ENCODE measurements at regions of chr20 and their contacts with region 1.

Region 1: DNA sequence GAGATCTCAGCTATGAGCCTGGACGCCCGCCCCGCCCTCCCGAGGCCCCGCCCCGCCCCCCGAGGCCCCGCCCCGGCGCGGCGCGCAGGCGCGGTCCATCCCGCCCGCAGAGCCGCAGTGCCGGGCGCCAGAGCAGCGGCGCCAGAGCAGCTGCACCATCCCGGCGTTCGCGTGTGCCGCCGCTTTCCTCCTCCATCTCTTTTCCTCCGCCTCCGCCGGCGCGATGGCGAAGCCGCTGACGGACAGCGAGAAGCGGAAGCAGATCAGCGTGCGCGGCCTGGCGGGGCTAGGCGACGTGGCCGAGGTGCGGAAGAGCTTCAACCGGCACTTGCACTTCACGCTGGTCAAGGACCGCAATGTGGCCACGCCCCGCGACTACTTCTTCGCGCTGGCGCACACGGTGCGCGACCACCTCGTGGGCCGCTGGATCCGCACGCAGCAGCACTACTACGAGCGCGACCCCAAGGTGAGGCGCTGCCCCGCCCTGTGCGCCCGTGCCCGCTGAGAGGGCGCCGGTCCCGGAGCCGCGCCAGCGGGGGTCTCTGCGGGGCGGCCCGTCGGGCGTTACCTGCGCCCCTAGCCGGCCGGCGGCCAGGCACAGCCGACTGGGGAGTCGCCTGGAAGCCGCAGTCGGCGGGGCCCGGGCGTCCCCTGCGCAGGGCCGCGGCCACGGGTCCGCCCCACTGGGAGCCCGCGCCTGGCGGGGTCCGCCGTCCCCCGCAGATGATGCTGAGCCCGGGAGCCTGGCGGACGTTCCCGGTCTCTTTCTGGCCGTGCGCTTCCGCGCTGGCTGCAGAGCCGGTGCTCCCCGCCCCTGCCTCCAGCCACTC is at the start of gene PYGB:
- DNase-seq: peak; percentile 83
- H3K4me3 ChIP-seq: peak within 1 kb of the TSS; percentile 91 to 97
- H3K27ac ChIP-seq: peak within 1 kb of the TSS; percentile 96 to 98
- H3K4me1 ChIP-seq: peaks cover 25% of the 10 kb centered on the region
- H3K27me3 ChIP-seq: no peaks in the 10 kb centered on the region
- CTCF ChIP-seq: peak in 1 of 4 experiments; percentile 9
- POLR2A ChIP-seq: peak; percentile 95
- total RNA-seq, gene PYGB: 231 to 261 TPM

Region 2: DNA sequence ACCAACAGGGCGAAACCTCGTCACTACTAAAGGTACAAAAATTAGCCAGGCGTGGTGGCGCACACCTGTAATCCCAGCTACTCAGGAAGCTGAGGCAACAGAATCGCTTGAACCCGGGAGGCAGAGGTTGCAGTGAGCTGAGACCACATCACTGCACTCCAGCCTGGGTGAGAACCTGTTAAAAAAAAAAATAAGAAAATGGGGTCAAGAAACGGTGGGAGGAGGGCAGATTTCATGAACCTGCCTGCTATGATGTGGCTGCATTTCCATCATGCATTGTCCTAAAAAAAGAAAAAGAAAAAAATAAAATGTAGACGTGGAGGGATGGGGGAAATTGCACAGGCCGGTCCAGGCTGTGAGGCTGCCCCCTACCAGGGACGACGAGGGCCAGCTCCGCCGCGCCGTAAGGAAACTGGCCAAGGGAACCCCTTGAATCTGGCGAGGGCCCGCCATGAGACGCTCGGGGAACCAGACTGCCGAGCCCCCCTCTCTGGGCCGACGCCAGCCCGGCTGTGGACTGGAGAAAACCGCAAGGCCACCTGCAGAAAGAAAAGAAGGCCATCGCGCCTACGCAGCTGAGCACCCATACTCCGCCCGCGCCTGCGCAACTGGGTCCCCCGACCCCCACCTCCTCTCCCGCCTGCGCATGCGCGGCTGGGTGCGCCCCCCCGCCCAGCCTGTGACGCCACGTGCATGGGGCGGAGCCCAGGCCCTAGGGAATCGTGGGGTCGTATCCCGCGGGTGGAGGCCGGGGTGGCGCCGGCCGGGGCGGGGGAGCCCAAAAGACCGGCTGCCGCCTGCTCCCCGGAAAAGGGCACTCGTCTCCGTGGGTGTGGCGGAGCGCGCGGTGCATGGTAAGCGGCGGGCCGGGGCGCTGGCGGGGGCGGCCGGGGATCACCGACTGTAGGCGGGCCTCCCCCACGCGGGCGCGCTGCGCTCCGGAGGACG is 52.9 kb before region 1 on chr20 and contains the start of gene ENTPD6:
- intact Hi-C with region 1: loop called (anchors 2 kb)
- DNase-seq: peak; percentile 92
- H3K4me3 ChIP-seq: peak within 1 kb of the TSS; percentile 78 to 94
- H3K27ac ChIP-seq: peak within 1 kb of the TSS; percentile 93 to 95
- H3K4me1 ChIP-seq: peaks cover 4% of the 10 kb centered on the region
- H3K27me3 ChIP-seq: no peaks in the 10 kb centered on the region
- CTCF ChIP-seq: peak in 3 of 4 experiments; percentile 20 to 45 (median 31)
- POLR2A ChIP-seq: peak; percentile 92
- total RNA-seq, gene ENTPD6: 105 to 194 TPM

Region 3: GRCh38 chr20:25273541-25274358 is 25.6 kb after region 1 on chr20:
- intact Hi-C with region 1: loop called (anchors 1 kb)
- DNase-seq: peak; percentile 79
- H3K4me3 ChIP-seq: peak overlapping the region in 1 of 2 donors; percentile 6
- H3K27ac ChIP-seq: peak overlapping the region; percentile 70 to 74
- H3K4me1 ChIP-seq: peaks cover 21% of the 10 kb centered on the region
- H3K27me3 ChIP-seq: no peaks in the 10 kb centered on the region
- CTCF ChIP-seq: no peak
- POLR2A ChIP-seq: no peak

Region 4: DNA sequence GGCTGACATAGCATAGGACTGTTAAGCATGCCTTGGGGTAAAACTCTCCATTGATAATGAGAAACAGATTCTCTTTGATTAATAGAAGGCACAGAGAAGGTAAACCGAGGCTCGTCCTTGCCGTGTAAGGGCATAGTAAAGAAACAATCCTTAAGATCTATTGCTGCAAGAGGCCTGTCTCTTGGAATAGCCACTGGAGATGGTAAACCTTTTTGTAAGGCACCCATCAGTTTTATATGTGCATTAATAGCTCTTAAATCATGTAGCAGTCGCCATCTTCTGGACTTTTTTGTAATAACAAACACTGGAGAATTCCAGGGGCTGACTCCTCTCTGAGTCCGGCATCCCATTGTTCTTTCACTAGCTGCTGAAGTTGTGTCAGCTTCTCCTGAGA is 150.9 kb after region 1 on chr20:
- intact Hi-C with region 1: loop called (anchors 2 kb)
- DNase-seq: peak; percentile 72
- H3K4me3 ChIP-seq: no peak overlapping the region
- H3K27ac ChIP-seq: peak overlapping the region in 1 of 2 donors; percentile 5
- H3K4me1 ChIP-seq: no peaks in the 10 kb centered on the region
- H3K27me3 ChIP-seq: no peaks in the 10 kb centered on the region
- CTCF ChIP-seq: peak in 3 of 4 experiments; percentile 53 to 77 (median 69)
- POLR2A ChIP-seq: no peak

Measured in prostate gland (tissue), 2 donors.